ENCODE measurements at regions of chr9 and their contacts with region 1.

Region 1: DNA sequence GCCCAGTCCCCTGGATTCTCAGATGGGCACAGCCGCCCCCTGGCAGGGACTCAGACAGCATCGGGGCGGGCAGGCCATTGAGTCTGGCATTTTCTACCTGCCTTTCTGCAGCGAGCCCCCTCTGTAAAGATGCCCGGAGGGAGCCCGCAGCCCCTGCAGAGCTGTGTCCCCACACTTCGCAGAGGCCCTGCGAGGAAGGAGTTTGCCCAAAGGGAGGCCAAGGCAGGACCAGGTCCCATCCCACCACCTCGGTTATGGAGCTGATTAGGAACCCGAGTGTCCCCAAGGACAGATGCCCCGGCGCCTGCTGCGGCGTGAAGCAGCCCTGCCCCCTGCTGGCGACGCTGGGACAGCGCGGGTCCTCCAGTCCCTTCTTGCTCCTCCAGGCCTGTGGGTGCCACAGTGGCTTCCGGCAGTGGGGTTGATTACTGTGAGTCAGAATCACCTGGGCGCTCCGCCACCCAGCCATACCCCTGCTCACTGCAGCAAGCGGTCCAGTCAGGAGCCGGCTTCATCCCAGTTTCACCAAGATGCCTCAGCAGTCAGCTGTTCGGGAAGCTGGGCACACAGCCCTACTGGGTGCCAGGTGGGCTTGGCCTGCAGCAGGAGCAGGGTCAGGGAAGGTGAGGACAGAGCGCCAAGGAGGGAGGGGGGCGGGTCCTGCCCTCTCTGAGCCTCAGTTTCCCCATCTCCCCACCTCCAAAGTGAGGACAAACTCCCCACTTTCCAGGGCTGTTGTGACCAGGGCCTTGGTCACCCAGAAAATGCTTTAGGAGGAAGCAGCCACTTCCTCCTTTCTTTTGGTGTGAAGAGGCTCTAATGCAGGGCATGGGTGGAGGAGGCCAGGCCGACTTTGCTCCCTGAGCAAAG is 117.1 kb downstream of the RXRA start:
- H3K4me3 ChIP-seq: no peak overlapping the region
- H3K27ac ChIP-seq: no peak overlapping the region
- H3K4me1 ChIP-seq: no peaks in the 10 kb centered on the region; the same call in 1 of the 2 replicates
- CTCF ChIP-seq: peak; percentile 97

Region 2: GRCh38 chr9:133835255-133835901 is 608.0 kb before region 1 on chr9:
- CTCF ChIA-PET with region 1: no interaction called
- POLR2A ChIA-PET with region 1: no interaction called
- H3K4me3 ChIP-seq: no peak overlapping the region
- H3K27ac ChIP-seq: no peak overlapping the region
- H3K4me1 ChIP-seq: no peaks in the 10 kb centered on the region
- CTCF ChIP-seq: no peak

Region 3: GRCh38 chr9:134171316-134172197 is 271.8 kb before region 1 on chr9:
- CTCF ChIA-PET with region 1: interaction called, 129 read pairs
- POLR2A ChIA-PET with region 1: interaction called, 10 read pairs
- H3K4me3 ChIP-seq: no peak overlapping the region
- H3K27ac ChIP-seq: no peak overlapping the region
- H3K4me1 ChIP-seq: no peaks in the 10 kb centered on the region
- CTCF ChIP-seq: no peak

Region 4: GRCh38 chr9:134178768-134179551 is 264.4 kb before region 1 on chr9:
- CTCF ChIA-PET with region 1: interaction called, 32 read pairs
- POLR2A ChIA-PET with region 1: interaction called, 4 read pairs
- H3K4me3 ChIP-seq: no peak overlapping the region
- H3K27ac ChIP-seq: no peak overlapping the region
- H3K4me1 ChIP-seq: no peaks in the 10 kb centered on the region
- CTCF ChIP-seq: no peak

Region 5: GRCh38 chr9:134365791-134366688 is 77.4 kb before region 1 on chr9:
- CTCF ChIA-PET with region 1: interaction called, 12 read pairs
- POLR2A ChIA-PET with region 1: no interaction called
- H3K4me3 ChIP-seq: no peak overlapping the region
- H3K27ac ChIP-seq: no peak overlapping the region
- H3K4me1 ChIP-seq: peaks cover 7% of the 10 kb centered on the region
- CTCF ChIP-seq: no peak

Region 6: DNA sequence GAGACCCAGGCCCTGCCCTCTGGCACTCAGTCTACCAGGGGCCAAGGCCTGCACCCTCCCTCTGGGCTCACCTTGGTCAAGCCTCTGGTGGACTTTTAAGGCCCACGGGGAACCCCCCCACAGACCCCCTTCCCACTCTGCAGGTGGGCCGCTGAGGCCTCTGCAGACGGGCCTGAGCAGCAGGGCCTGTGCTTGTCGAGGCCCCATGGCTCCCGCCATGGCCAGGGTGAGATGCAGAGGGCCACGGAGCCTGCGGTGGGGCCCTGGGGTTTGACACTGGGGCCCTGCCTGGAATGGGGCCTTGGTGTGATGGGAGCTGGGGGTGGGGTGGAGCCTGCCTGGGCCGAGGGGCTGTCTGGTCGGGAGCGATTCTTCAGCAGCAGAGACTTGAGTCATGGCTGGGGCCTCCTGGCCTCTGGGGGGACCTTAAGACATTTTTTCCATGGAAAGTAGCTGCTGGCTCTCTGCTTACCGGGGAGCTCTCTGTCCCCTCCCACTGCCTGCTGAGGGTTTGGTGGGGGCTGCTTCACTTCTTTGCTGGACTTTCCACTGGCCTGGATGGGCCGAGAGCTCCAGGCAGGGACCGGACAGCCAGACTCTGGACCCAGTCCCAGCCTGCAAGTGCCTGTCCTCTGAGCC is 14.9 kb after region 1 on chr9:
- CTCF ChIA-PET with region 1: interaction called, 20 read pairs
- POLR2A ChIA-PET with region 1: no interaction called
- H3K4me3 ChIP-seq: no peak overlapping the region
- H3K27ac ChIP-seq: no peak overlapping the region
- H3K4me1 ChIP-seq: no peaks in the 10 kb centered on the region
- CTCF ChIP-seq: no peak